Thyroid gland (tissue), 4 donors: ENCODE measurements at regions of chr4 and their contacts with region 1.

Region 1: GRCh38 chr4:82629238-82630000 is 67.6 kb upstream of the TMEM150C start:
- DNase-seq: no peak
- H3K4me3 ChIP-seq: no peak overlapping the region
- H3K27ac ChIP-seq: no peak overlapping the region
- H3K4me1 ChIP-seq: no peaks in the 10 kb centered on the region
- H3K27me3 ChIP-seq: no peaks in the 10 kb centered on the region
- CTCF ChIP-seq: no peak
- POLR2A ChIP-seq: no peak

Region 2: DNA sequence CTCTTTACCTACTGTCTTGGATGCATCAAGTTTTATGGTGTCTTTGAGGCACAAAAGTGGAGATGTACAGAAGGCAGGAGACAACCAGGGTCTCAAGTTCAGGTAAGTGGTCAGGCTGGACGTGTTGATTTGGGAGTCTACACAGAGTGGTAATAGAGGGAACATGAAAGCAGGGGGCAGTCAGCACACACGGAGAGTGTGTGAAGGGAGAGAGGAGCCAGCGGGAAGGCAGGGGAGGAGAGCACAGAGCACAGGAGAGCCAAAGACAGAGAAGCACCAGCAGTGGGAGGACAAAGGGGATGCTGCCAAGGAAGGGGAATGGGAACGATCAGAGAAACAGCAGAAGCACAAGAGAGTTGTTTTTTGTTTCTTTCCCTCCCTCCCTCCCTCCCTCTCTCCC is 100.6 kb before region 1 on chr4:
- intact Hi-C with region 1: no loop called
- DNase-seq: no peak
- H3K4me3 ChIP-seq: no peak overlapping the region
- H3K27ac ChIP-seq: no peak overlapping the region
- H3K4me1 ChIP-seq: no peaks in the 10 kb centered on the region
- H3K27me3 ChIP-seq: no peaks in the 10 kb centered on the region
- CTCF ChIP-seq: no peak
- POLR2A ChIP-seq: no peak

Region 3: GRCh38 chr4:82652062-82652461 is 22.6 kb after region 1 on chr4:
- intact Hi-C with region 1: loop called (anchors 2 kb)
- DNase-seq: no peak
- H3K4me3 ChIP-seq: no peak overlapping the region
- H3K27ac ChIP-seq: no peak overlapping the region
- H3K4me1 ChIP-seq: no peaks in the 10 kb centered on the region
- H3K27me3 ChIP-seq: no peaks in the 10 kb centered on the region
- CTCF ChIP-seq: no peak
- POLR2A ChIP-seq: no peak

Region 4: DNA sequence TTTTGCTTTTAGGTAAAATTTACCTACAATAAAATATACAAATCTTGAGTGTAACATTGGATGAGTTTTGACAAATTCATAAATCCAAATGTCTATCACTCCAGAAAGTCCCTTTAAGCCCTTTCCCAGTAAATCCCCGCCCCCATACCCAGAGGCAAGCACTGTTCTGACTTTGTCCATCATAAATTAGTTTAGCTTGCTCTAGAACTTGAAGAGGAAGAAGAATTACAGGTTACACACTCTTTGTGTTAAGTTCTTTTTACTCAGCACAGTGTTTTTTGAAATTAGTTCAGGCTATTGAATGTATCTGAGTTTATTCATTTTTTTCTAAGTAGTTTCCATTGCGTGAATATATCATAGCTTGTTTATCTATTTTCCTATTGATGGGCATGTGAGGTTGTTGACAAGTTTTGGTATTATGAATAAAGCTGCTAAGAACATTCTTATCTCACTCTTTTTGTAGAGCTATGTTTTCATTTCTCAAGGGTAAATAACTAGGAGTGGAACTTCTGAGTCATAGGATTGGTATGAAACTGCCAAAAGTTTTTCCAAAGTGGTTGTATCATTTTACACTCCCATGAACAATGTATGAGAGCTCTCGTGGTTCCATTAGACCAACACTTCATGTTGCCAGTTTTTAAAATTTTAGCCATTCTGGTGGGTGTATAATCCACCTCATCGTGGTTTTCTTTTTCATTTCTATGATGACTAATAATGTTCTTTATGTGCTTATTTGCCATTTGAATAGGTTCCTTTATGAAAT is 727.7 kb after region 1 on chr4:
- intact Hi-C with region 1: no loop called
- DNase-seq: peak; percentile 13 to 17
- H3K4me3 ChIP-seq: no peak overlapping the region
- H3K27ac ChIP-seq: peak overlapping the region; percentile 63 to 92 (median 72)
- H3K4me1 ChIP-seq: peaks cover 13 to 15% of the 10 kb centered on the region in 2 donors
- H3K27me3 ChIP-seq: no peaks in the 10 kb centered on the region
- CTCF ChIP-seq: no peak
- POLR2A ChIP-seq: no peak